ENCODE measurements at regions of chr22 and their contacts with region 1.

Region 1: GRCh38 chr22:31749636-31750364 is at the start of gene PRR14L:
- DNase-seq: peak; percentile 99
- H3K4me3 ChIP-seq: peak within 1 kb of the TSS; percentile 63 to 100 (median 98)
- H3K27ac ChIP-seq: peak within 1 kb of the TSS; percentile 93 to 99 (median 95)
- H3K4me1 ChIP-seq: peaks cover 14 to 48% (median 33%) of the 10 kb centered on the region in 4 donors
- H3K27me3 ChIP-seq: no peaks in the 10 kb centered on the region
- CTCF ChIP-seq: peak in 2 of 5 experiments; percentile 23 to 24
- EP300 ChIP-seq: no peak
- POLR2A ChIP-seq: peak; percentile 94
- total RNA-seq, gene PRR14L: 37.0 to 53.7 (median 49.2) TPM

Region 2: DNA sequence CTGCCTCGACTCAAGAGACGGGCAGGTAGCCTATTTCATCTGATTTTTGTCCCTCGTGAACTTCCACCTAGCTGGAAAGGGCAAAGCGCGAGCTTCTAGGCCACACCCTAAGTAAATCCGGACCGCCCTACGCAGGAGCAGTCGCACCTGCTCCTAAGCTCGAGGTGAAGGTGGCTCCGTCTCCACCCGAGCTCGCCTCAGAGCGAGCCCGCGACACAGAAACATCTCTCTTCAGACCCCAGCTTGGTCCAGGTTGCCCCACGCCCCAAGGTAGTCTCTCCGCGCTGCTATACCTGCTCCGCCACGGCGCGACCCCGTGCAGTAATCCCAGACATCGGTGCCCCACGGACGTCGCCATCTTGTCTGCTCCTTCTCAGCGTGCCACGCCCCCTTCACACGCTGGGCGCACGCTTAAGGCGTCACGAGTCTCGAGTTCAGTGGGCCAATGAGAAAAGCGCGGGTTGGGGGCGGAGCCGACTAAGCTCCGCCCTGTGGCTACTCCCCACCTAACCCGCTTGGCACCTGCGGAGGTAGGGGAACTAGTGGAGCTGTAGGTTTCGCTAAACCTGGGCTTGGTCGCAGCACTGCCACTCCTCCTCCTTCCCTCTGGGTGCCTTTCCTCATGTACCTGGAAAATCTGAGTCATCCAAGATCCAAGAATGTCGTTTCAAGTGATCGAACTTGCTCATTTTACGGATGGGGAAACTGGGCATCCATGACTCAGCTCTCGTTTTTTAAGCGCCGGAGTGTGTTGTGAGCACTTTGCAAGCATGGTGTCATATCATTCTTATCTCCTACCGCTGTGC is 87.7 kb before region 1 on chr22 and contains the start of gene PISD:
- in situ Hi-C with region 1: loop called in 1 of 4 experiments (anchors 10 kb)
- intact Hi-C with region 1: no loop called
- DNase-seq: peak; percentile 98
- H3K4me3 ChIP-seq: peak within 1 kb of the TSS; percentile 63 to 97 (median 78)
- H3K27ac ChIP-seq: peak within 1 kb of the TSS; percentile 80 to 86 (median 84)
- H3K4me1 ChIP-seq: peaks cover 9 to 17% (median 14%) of the 10 kb centered on the region in 4 donors
- H3K27me3 ChIP-seq: no peaks in the 10 kb centered on the region
- CTCF ChIP-seq: no peak
- EP300 ChIP-seq: no peak
- POLR2A ChIP-seq: peak; percentile 90
- total RNA-seq, gene PISD: 33.7 to 111 (median 47.7) TPM

Region 3: GRCh38 chr22:31676700-31677099 is 73.1 kb before region 1 on chr22:
- in situ Hi-C with region 1: loop called in 1 of 4 experiments (anchors 10 kb)
- intact Hi-C with region 1: no loop called
- DNase-seq: peak; percentile 97
- H3K4me3 ChIP-seq: peak overlapping the region in 3 of 4 donors; percentile 25 to 59 (median 32)
- H3K27ac ChIP-seq: peak overlapping the region; percentile 62 to 80 (median 68)
- H3K4me1 ChIP-seq: peaks cover 5 to 16% (median 10%) of the 10 kb centered on the region in 4 donors
- H3K27me3 ChIP-seq: no peaks in the 10 kb centered on the region
- CTCF ChIP-seq: no peak
- EP300 ChIP-seq: no peak
- POLR2A ChIP-seq: peak; percentile 83